H1 (cell line): ENCODE measurements at regions of chr1 and their contacts with region 1.

Region 1: GRCh38 chr1:47587891-47588582 is 150.2 kb downstream of the FOXD2 start:
- DNase-seq: peak in 1 of 2 experiments; percentile 43
- H3K4me3 ChIP-seq: no peak overlapping the region
- H3K27ac ChIP-seq: no peak overlapping the region
- H3K4me1 ChIP-seq: peaks cover 0 to 9% (median 5%) of the 10 kb centered on the region in 4 experiments; a peak in 5 of 7 replicates
- H3K27me3 ChIP-seq: peaks cover 8 to 24% (median 16%) of the 10 kb centered on the region in 4 experiments
- CTCF ChIP-seq: no peak
- EP300 ChIP-seq: no peak
- POLR2A ChIP-seq: no peak
- RAD21 ChIP-seq: no peak

Region 2: DNA sequence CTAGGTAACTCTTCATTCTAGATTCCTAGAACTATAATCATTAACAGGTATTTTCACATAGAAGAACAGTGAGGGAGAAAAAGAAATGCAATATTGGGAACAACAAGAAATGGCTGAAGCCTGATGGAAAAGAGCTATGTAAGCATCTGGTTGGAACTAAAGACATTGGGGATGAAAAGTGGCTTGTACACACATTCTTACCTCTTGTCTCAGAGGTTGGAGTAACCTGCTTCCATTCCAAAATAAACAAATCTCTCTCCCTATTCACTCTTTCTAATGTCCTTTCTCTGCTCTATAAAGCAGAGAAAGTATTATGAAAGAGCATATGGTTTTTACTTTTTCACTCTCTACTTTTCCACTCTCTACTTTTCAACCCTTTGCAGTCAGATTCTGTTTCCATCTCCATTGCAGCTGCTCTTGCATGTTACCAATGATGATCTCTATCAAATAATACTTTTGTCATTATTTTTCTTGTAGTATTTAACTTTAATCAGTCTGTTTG is 217.0 kb before region 1 on chr1:
- CTCF ChIA-PET with region 1: no interaction called
- POLR2A ChIA-PET with region 1: no interaction called
- DNase-seq: no peak
- H3K4me3 ChIP-seq: no peak overlapping the region
- H3K27ac ChIP-seq: no peak overlapping the region
- H3K4me1 ChIP-seq: no peaks in the 10 kb centered on the region
- H3K27me3 ChIP-seq: no peaks in the 10 kb centered on the region
- CTCF ChIP-seq: no peak
- EP300 ChIP-seq: no peak
- POLR2A ChIP-seq: no peak
- RAD21 ChIP-seq: no peak

Region 3: GRCh38 chr1:47469390-47469759 is 118.7 kb before region 1 on chr1:
- CTCF ChIA-PET with region 1: no interaction called
- POLR2A ChIA-PET with region 1: no interaction called
- DNase-seq: no peak
- H3K4me3 ChIP-seq: no peak overlapping the region
- H3K27ac ChIP-seq: no peak overlapping the region
- H3K4me1 ChIP-seq: peaks cover 0 to 7% (median 3%) of the 10 kb centered on the region in 4 experiments; a peak in 3 of 7 replicates
- H3K27me3 ChIP-seq: no peaks in the 10 kb centered on the region
- CTCF ChIP-seq: no peak
- EP300 ChIP-seq: no peak
- POLR2A ChIP-seq: no peak
- RAD21 ChIP-seq: no peak

Region 4: GRCh38 chr1:47519971-47520370 is 68.1 kb before region 1 on chr1:
- CTCF ChIA-PET with region 1: no interaction called
- POLR2A ChIA-PET with region 1: no interaction called
- DNase-seq: no peak
- H3K4me3 ChIP-seq: no peak overlapping the region
- H3K27ac ChIP-seq: no peak overlapping the region
- H3K4me1 ChIP-seq: peaks cover 3 to 11% (median 6%) of the 10 kb centered on the region in 4 experiments; a peak in 6 of 7 replicates
- H3K27me3 ChIP-seq: peaks cover 0 to 4% (median 0%) of the 10 kb centered on the region in 4 experiments; a peak in 4 of 7 replicates
- CTCF ChIP-seq: no peak
- EP300 ChIP-seq: no peak
- POLR2A ChIP-seq: no peak
- RAD21 ChIP-seq: no peak

Region 5: GRCh38 chr1:47598357-47598756 is 10.3 kb after region 1 on chr1:
- CTCF ChIA-PET with region 1: interaction called, 12 read pairs
- POLR2A ChIA-PET with region 1: no interaction called
- DNase-seq: no peak
- H3K4me3 ChIP-seq: no peak overlapping the region
- H3K27ac ChIP-seq: no peak overlapping the region
- H3K4me1 ChIP-seq: peaks cover 0 to 3% (median 0%) of the 10 kb centered on the region in 4 experiments; a peak in 1 of 7 replicates
- H3K27me3 ChIP-seq: peaks cover 9 to 14% (median 12%) of the 10 kb centered on the region in 4 experiments
- CTCF ChIP-seq: no peak
- EP300 ChIP-seq: no peak
- POLR2A ChIP-seq: no peak
- RAD21 ChIP-seq: no peak